Endothelial cell of umbilical vein (primary cell): ENCODE measurements at regions of chr4 and their contacts with region 1.

Region 1: GRCh38 chr4:112231779-112232713 is at the start of gene AP1AR:
- DNase-seq: peak; percentile 86
- H3K4me3 ChIP-seq: peak within 1 kb of the TSS; percentile 95 to 98 (median 97)
- H3K27ac ChIP-seq: peak within 1 kb of the TSS; percentile 77
- H3K4me1 ChIP-seq: peaks cover 33% of the 10 kb centered on the region
- H3K27me3 ChIP-seq: no peaks in the 10 kb centered on the region
- CTCF ChIP-seq: peak; percentile 24 to 62
- POLR2A ChIP-seq: peak; percentile 87
- total RNA-seq, gene AP1AR: 18.6 and 20.6 TPM in 2 replicates

Region 2: GRCh38 chr4:110533940-110534339 is 1698.1 kb before region 1 on chr4:
- CTCF ChIA-PET with region 1: no interaction called
- POLR2A ChIA-PET with region 1: no interaction called
- dilution Hi-C with region 1: no loop called
- intact Hi-C with region 1: loop called (anchors 5 kb)
- DNase-seq: peak; percentile 94
- H3K4me3 ChIP-seq: peak overlapping the region in 1 of 3 experiments; percentile 54
- H3K27ac ChIP-seq: peak overlapping the region; percentile 94
- H3K4me1 ChIP-seq: peaks cover 38% of the 10 kb centered on the region
- H3K27me3 ChIP-seq: no peaks in the 10 kb centered on the region
- CTCF ChIP-seq: no peak
- POLR2A ChIP-seq: no peak

Region 3: GRCh38 chr4:112060212-112060611 is 171.8 kb before region 1 on chr4:
- CTCF ChIA-PET with region 1: interaction called, 5 read pairs
- POLR2A ChIA-PET with region 1: no interaction called
- dilution Hi-C with region 1: no loop called
- intact Hi-C with region 1: loop called (anchors 1 kb)
- DNase-seq: peak; percentile 59
- H3K4me3 ChIP-seq: no peak overlapping the region
- H3K27ac ChIP-seq: no peak overlapping the region
- H3K4me1 ChIP-seq: peaks cover 9% of the 10 kb centered on the region
- H3K27me3 ChIP-seq: no peaks in the 10 kb centered on the region
- CTCF ChIP-seq: peak; percentile 45 to 58
- POLR2A ChIP-seq: no peak

Region 4: GRCh38 chr4:112082954-112083586 is 149.0 kb before region 1 on chr4:
- CTCF ChIA-PET with region 1: interaction called, 5 read pairs
- POLR2A ChIA-PET with region 1: interaction called, 4 read pairs
- dilution Hi-C with region 1: no loop called
- intact Hi-C with region 1: loop called (anchors 1 kb)
- DNase-seq: peak; percentile 99
- H3K4me3 ChIP-seq: no peak overlapping the region
- H3K27ac ChIP-seq: peak overlapping the region; percentile 95
- H3K4me1 ChIP-seq: peaks cover 41% of the 10 kb centered on the region
- H3K27me3 ChIP-seq: no peaks in the 10 kb centered on the region
- CTCF ChIP-seq: no peak
- POLR2A ChIP-seq: peak; percentile 76

Region 5: DNA sequence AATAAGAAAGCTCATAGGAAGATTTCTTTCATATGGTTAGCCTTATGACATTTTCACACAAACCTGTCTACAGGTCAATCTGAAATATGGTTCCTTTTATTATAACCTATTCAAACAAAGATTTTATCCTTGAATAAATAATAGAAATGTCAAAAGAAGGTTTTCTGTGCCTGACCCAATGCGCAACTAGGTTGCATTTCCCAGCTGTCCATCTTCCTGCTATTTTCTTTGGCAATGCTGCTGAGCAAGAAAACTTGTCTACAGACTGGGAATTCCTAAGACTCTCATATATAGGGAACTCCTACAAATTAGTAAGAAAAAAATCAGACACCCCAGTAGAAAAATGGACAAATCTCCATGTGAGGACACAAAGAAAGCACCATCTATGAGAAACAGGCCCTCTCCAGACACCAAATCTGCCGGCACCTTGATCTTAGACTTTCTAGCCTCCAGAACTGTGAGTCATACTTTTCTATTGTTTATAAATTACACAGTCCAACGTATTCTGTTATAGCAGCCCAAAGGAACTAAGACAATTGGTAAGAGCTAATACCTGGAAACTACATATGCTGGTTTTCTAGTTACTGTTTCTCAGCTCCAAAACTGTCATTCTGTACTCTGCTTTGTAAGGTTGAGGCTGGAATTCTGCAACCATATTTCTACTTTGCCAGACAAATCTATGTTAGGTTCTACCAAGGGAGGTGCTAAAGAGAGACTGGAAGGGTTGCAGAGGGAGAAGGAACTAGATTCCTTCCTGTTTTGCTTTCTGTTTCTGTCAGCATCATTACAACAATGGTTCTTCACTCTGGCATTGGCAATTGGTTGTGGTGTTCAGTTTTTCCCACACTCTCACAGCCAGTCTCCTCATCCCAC is 122.6 kb before region 1 on chr4:
- CTCF ChIA-PET with region 1: interaction called, 5 read pairs
- POLR2A ChIA-PET with region 1: no interaction called
- dilution Hi-C with region 1: no loop called
- intact Hi-C with region 1: loop called (anchors 1 kb)
- DNase-seq: peak; percentile 86
- H3K4me3 ChIP-seq: peak overlapping the region in 1 of 3 experiments; percentile 28
- H3K27ac ChIP-seq: peak overlapping the region; percentile 94
- H3K4me1 ChIP-seq: peaks cover 20% of the 10 kb centered on the region
- H3K27me3 ChIP-seq: no peaks in the 10 kb centered on the region
- CTCF ChIP-seq: no peak
- POLR2A ChIP-seq: peak; percentile 55

Region 6: DNA sequence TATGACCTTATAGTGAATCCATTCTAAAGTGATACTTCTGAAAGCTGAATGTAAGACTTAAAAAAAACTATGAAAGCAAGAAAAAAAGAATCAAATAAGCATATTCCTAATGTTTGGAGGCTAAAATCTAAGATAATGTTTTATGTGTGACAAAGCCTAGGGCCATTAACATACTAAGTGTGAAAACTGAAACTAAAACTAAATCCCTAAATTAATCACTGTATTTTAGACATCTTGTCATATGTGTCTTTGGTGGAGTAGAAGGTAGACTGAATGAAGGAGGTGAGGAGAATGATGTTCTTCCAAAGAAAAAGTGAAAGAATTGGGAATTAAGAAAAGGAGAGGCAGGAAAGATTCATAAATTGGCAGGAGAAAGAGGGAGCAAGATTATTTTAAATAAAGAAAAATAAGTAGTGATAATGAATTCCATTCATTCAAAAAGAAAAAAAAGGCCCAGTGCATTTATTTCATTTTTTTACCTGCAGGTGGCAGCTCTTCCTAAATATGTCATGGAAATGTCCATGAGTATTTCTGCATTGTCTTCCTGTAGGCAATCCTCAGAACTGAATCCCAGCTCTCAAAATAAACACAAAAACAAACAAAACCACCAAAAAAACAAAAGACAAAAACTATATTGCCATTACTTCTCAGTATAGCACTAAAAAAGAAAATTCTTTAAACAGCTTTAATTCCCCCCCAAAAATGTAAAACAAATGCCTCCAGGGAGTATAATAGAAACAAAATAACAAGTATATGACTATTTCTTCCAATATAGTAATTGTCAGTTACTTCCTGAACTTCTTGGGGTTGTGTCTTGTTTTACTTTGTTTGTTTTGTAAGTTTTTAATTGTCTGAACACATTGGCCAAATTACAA is 17.4 kb before region 1 on chr4:
- CTCF ChIA-PET with region 1: interaction called, 55 read pairs
- POLR2A ChIA-PET with region 1: no interaction called
- dilution Hi-C with region 1: no loop called
- intact Hi-C with region 1: loop called (anchors 1 kb)
- DNase-seq: peak; percentile 34
- H3K4me3 ChIP-seq: no peak overlapping the region
- H3K27ac ChIP-seq: no peak overlapping the region
- H3K4me1 ChIP-seq: no peaks in the 10 kb centered on the region
- H3K27me3 ChIP-seq: no peaks in the 10 kb centered on the region
- CTCF ChIP-seq: peak in 1 of 2 donors; percentile 27
- POLR2A ChIP-seq: no peak

Region 7: GRCh38 chr4:112302320-112303274 is 70.6 kb after region 1 on chr4:
- CTCF ChIA-PET with region 1: no interaction called
- POLR2A ChIA-PET with region 1: no interaction called
- dilution Hi-C with region 1: no loop called
- intact Hi-C with region 1: no loop called
- DNase-seq: no peak
- H3K4me3 ChIP-seq: no peak overlapping the region
- H3K27ac ChIP-seq: no peak overlapping the region
- H3K4me1 ChIP-seq: peaks cover 2% of the 10 kb centered on the region
- H3K27me3 ChIP-seq: no peaks in the 10 kb centered on the region
- CTCF ChIP-seq: no peak
- POLR2A ChIP-seq: no peak

Region 8: GRCh38 chr4:112523764-112524505 is 291.9 kb after region 1 on chr4:
- CTCF ChIA-PET with region 1: no interaction called
- POLR2A ChIA-PET with region 1: no interaction called
- dilution Hi-C with region 1: no loop called
- intact Hi-C with region 1: loop called (anchors 5 kb)
- DNase-seq: no peak
- H3K4me3 ChIP-seq: peak overlapping the region; percentile 1 to 56 (median 18)
- H3K27ac ChIP-seq: no peak overlapping the region
- H3K4me1 ChIP-seq: peaks cover 10% of the 10 kb centered on the region
- H3K27me3 ChIP-seq: peaks cover 62 to 82% of the 10 kb centered on the region in 2 experiments
- CTCF ChIP-seq: peak; percentile 72 to 79
- POLR2A ChIP-seq: no peak